Endothelial cell of umbilical vein (primary cell): ENCODE measurements at regions of chr1 and their contacts with region 1.

Region 1: DNA sequence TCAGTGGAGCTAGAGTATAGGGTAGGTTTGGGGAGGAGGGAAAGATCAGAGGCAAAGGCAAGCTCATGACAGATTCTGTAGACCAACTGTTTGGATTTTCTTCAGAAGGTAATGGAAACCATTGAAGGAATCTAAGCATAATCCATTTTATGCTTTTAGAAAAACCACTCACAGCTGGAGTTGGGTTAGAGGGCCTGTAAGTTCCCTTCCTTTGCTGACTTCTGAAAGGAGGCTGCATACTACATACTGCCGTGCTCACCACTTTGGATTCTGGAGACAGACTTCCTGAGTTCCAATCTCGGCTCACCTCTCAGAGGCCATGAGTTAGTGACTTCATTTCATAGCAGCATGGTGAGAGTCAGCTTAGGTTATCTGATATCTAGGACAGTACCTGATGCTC is 6.4 kb upstream of the SYT2 start:
- DNase-seq: no peak
- H3K4me3 ChIP-seq: no peak overlapping the region
- H3K27ac ChIP-seq: no peak overlapping the region
- H3K4me1 ChIP-seq: peaks cover 13% of the 10 kb centered on the region
- H3K27me3 ChIP-seq: peaks cover 9 to 20% of the 10 kb centered on the region in 2 experiments
- CTCF ChIP-seq: no peak
- POLR2A ChIP-seq: no peak

Region 2: GRCh38 chr1:202274611-202275010 is 442.0 kb before region 1 on chr1:
- CTCF ChIA-PET with region 1: interaction called, 8 read pairs
- POLR2A ChIA-PET with region 1: no interaction called
- dilution Hi-C with region 1: no loop called
- intact Hi-C with region 1: loop called (anchors 1 kb)
- DNase-seq: peak; percentile 48
- H3K4me3 ChIP-seq: no peak overlapping the region
- H3K27ac ChIP-seq: no peak overlapping the region
- H3K4me1 ChIP-seq: peaks cover 9% of the 10 kb centered on the region
- H3K27me3 ChIP-seq: peaks cover 4% of the 10 kb centered on the region in 2 experiments
- CTCF ChIP-seq: peak; percentile 69 to 74
- POLR2A ChIP-seq: no peak

Region 3: DNA sequence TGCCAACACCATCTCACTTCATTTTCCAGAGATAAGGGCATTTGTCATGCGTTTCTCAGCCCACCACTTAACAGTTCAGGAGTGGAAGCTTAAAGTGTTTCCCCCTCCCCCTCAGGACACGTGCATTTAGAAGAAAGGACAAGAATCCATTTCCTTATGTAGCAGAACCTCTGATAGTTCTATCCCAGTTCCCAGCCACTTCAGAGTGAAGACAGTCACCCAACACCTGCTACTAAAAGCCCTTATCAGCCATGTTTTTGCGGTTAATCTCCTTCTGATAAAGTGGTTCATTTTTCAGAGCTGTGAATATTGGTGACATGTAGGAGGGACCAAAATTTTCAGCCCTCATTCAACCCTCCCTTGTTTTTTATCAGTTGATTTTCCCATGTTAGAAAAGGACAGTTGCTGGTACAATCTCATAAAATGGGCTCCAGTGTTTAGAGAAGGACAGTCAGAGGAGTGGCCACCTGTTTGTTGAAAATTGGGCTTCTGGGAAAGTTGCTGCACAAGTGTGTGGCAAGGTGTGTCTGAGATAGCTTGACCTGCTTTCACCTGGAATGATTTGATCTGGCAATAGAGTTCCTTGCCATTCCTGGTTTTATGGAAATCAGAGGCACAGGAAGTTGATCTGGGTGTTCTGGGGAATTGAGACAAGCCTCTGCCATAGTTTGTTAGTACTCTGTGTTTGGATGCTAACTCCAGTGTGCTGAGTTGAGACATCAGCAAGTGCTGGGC is 254.1 kb before region 1 on chr1:
- CTCF ChIA-PET with region 1: interaction called, 78 read pairs
- POLR2A ChIA-PET with region 1: no interaction called
- dilution Hi-C with region 1: no loop called
- intact Hi-C with region 1: loop called (anchors 1 kb)
- DNase-seq: no peak
- H3K4me3 ChIP-seq: no peak overlapping the region
- H3K27ac ChIP-seq: no peak overlapping the region
- H3K4me1 ChIP-seq: peaks cover 15% of the 10 kb centered on the region
- H3K27me3 ChIP-seq: no peaks in the 10 kb centered on the region
- CTCF ChIP-seq: no peak
- POLR2A ChIP-seq: no peak

Region 4: GRCh38 chr1:202656951-202657646 is 59.6 kb before region 1 on chr1:
- CTCF ChIA-PET with region 1: interaction called, 31 read pairs
- POLR2A ChIA-PET with region 1: no interaction called
- dilution Hi-C with region 1: no loop called
- intact Hi-C with region 1: loop called (anchors 5 kb)
- DNase-seq: peak; percentile 26
- H3K4me3 ChIP-seq: no peak overlapping the region
- H3K27ac ChIP-seq: no peak overlapping the region
- H3K4me1 ChIP-seq: no peaks in the 10 kb centered on the region
- H3K27me3 ChIP-seq: peaks cover 10 to 12% of the 10 kb centered on the region in 2 experiments
- CTCF ChIP-seq: peak; percentile 13 to 33
- POLR2A ChIP-seq: no peak

Region 5: GRCh38 chr1:202728951-202729350 is 12.3 kb after region 1 on chr1:
- CTCF ChIA-PET with region 1: interaction called, 15 read pairs
- POLR2A ChIA-PET with region 1: no interaction called
- dilution Hi-C with region 1: no loop called
- intact Hi-C with region 1: no loop called
- DNase-seq: no peak
- H3K4me3 ChIP-seq: no peak overlapping the region
- H3K27ac ChIP-seq: no peak overlapping the region
- H3K4me1 ChIP-seq: no peaks in the 10 kb centered on the region
- H3K27me3 ChIP-seq: no peaks in the 10 kb centered on the region
- CTCF ChIP-seq: no peak
- POLR2A ChIP-seq: no peak

Region 6: DNA sequence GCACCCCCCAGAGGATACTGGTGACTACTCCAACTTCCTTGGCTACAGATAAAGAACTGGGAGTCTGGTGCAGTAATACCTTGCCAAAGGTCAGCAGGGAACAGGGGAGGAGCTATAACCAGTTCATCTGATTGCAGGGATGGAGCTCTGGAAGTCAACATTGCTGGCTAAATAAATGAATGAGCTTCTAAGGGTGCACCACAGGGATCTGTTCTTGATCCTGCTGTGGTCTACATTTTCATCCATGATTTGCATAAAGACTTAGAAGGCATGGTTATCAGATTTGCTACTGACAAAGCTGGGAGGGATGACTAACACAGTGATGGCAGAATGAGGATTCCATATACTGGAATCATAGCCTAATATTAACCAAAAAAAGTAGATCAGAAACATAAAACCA is 1624.7 kb after region 1 on chr1:
- CTCF ChIA-PET with region 1: no interaction called
- POLR2A ChIA-PET with region 1: no interaction called
- dilution Hi-C with region 1: no loop called
- intact Hi-C with region 1: no loop called
- DNase-seq: no peak
- H3K4me3 ChIP-seq: no peak overlapping the region
- H3K27ac ChIP-seq: no peak overlapping the region
- H3K4me1 ChIP-seq: peaks cover 11% of the 10 kb centered on the region
- H3K27me3 ChIP-seq: no peaks in the 10 kb centered on the region
- CTCF ChIP-seq: no peak
- POLR2A ChIP-seq: no peak